Caco-2 (cell line): ENCODE measurements at regions of chr6 and their contacts with region 1.

Region 1: GRCh38 chr6:159104163-159104925 is 59.6 kb upstream of the TAGAP start:
- DNase-seq: peak; percentile 54 to 73
- H3K4me3 ChIP-seq: no peak overlapping the region
- H3K4me3 Mint-ChIP-seq: no peak overlapping the region
- H3K27ac Mint-ChIP-seq: no peak overlapping the region
- H3K4me1 ChIP-seq: 0 out of 2 replicates have a peak, but pooled peaks cover 4% of the 10 kb centered on the region
- H3K4me1 Mint-ChIP-seq: peaks cover 12% of the 10 kb centered on the region
- H3K27me3 ChIP-seq: no peaks in the 10 kb centered on the region; the same call in none of the 2 replicates
- H3K27me3 Mint-ChIP-seq: no peaks in the 10 kb centered on the region
- CTCF ChIP-seq: peak; percentile 88 to 98

Region 2: DNA sequence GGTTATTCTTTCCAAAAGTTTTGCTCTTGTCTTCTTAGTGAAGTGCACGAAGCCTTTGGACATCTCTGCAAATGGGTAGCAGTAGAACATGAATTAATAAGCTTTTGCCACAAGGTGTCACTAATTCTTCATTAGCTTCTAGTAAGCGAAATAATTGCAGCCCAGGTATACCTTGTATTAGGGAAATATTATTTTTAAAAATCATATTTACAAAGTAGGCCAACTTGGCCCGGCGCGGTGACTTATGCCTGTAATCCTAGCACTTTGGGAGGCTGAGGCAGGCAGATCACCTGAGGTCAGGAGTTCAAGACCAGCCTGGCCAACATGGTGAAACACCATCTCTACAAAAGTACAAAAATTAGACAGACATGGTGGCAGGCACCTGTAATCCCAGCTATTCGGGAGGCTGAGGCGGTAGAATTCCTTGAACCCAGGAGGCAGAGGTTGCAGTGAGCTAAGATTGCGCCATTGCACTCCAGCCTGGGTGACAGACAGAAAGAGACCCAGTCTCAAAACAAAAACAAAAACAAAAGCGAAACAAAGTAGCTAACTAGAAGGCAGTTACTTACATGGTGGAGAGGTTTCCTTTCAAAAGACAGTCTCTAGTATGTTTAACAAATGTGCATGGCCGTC is 95.6 kb before region 1 on chr6:
- CTCF ChIA-PET with region 1: interaction called, 9 read pairs
- POLR2A ChIA-PET with region 1: interaction called, 3 read pairs
- intact Hi-C with region 1: loop called (anchors 1 kb)
- DNase-seq: peak in 1 of 2 experiments; percentile 30
- H3K4me3 ChIP-seq: no peak overlapping the region
- H3K4me3 Mint-ChIP-seq: no peak overlapping the region
- H3K27ac Mint-ChIP-seq: no peak overlapping the region
- H3K4me1 ChIP-seq: no peaks in the 10 kb centered on the region
- H3K4me1 Mint-ChIP-seq: peaks cover 7% of the 10 kb centered on the region
- H3K27me3 ChIP-seq: no peaks in the 10 kb centered on the region
- H3K27me3 Mint-ChIP-seq: no peaks in the 10 kb centered on the region
- CTCF ChIP-seq: peak; percentile 30 to 46

Region 3: GRCh38 chr6:159042003-159042825 is 62.1 kb before region 1 on chr6:
- CTCF ChIA-PET with region 1: interaction called, 10 read pairs
- POLR2A ChIA-PET with region 1: no interaction called
- intact Hi-C with region 1: loop called (anchors 1 kb)
- DNase-seq: peak; percentile 72 to 80
- H3K4me3 ChIP-seq: no peak overlapping the region
- H3K4me3 Mint-ChIP-seq: no peak overlapping the region
- H3K27ac Mint-ChIP-seq: peak overlapping the region; percentile 61
- H3K4me1 ChIP-seq: no peaks in the 10 kb centered on the region
- H3K4me1 Mint-ChIP-seq: no peaks in the 10 kb centered on the region
- H3K27me3 ChIP-seq: no peaks in the 10 kb centered on the region
- H3K27me3 Mint-ChIP-seq: peaks cover 19% of the 10 kb centered on the region
- CTCF ChIP-seq: peak; percentile 87 to 91

Region 4: DNA sequence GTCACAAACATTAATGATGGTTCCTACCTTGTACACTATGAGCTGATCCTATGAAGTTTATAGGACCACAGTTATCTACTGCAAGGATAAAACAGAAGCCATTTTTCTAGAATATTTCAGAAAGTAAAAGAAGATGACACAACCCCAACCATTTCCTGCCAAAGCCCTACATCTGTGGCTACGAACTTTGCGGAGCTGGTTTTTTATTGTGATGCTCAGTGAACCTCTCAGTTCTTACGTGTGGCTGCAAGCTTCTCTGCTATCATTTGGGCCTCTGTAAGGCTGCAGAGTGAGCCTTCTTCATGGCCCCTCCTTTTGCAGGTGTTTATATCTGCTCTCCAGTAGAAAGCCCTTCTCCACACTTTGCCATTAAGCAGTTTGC is 41.8 kb before region 1 on chr6:
- CTCF ChIA-PET with region 1: no interaction called
- POLR2A ChIA-PET with region 1: no interaction called
- intact Hi-C with region 1: no loop called
- DNase-seq: no peak
- H3K4me3 ChIP-seq: no peak overlapping the region
- H3K4me3 Mint-ChIP-seq: no peak overlapping the region
- H3K27ac Mint-ChIP-seq: no peak overlapping the region
- H3K4me1 ChIP-seq: no peaks in the 10 kb centered on the region
- H3K4me1 Mint-ChIP-seq: no peaks in the 10 kb centered on the region
- H3K27me3 ChIP-seq: peaks cover 2% of the 10 kb centered on the region
- H3K27me3 Mint-ChIP-seq: peaks cover 24% of the 10 kb centered on the region
- CTCF ChIP-seq: no peak

Region 5: DNA sequence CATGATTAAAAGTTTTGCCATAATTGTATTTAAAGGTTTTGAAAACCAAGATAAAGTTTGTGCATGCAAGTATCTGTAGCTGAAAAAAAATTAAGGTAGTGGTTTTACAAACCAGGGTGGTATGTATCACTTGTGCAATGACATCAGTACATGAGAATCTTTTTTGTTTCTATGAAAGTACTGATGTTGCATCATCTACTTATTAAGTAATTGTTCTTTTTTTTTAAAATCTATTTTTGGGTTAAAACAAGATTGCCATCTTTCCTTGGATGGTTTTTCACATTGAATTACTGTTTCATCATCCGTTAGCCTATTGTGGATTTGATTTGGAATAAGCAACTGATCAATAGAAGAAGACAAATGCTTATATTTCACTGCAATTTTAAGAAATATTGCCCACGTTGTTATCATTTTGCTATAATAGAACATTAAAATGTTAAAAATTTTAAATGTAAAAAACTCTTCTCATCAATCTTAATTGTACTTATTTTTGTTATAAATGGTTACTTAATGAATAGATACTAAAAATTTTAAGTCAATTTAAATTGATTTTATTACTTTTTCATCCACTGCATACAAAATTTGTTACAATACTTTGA is 19.8 kb before region 1 on chr6:
- CTCF ChIA-PET with region 1: interaction called, 15 read pairs
- POLR2A ChIA-PET with region 1: no interaction called
- intact Hi-C with region 1: no loop called
- DNase-seq: no peak
- H3K4me3 ChIP-seq: no peak overlapping the region
- H3K4me3 Mint-ChIP-seq: no peak overlapping the region
- H3K27ac Mint-ChIP-seq: no peak overlapping the region
- H3K4me1 ChIP-seq: no peaks in the 10 kb centered on the region
- H3K4me1 Mint-ChIP-seq: peaks cover 6% of the 10 kb centered on the region
- H3K27me3 ChIP-seq: no peaks in the 10 kb centered on the region; the same call in 1 of the 2 replicates
- H3K27me3 Mint-ChIP-seq: peaks cover 8% of the 10 kb centered on the region
- CTCF ChIP-seq: no peak